ENCODE measurements at regions of chr7 and their contacts with region 1.

Region 1: DNA sequence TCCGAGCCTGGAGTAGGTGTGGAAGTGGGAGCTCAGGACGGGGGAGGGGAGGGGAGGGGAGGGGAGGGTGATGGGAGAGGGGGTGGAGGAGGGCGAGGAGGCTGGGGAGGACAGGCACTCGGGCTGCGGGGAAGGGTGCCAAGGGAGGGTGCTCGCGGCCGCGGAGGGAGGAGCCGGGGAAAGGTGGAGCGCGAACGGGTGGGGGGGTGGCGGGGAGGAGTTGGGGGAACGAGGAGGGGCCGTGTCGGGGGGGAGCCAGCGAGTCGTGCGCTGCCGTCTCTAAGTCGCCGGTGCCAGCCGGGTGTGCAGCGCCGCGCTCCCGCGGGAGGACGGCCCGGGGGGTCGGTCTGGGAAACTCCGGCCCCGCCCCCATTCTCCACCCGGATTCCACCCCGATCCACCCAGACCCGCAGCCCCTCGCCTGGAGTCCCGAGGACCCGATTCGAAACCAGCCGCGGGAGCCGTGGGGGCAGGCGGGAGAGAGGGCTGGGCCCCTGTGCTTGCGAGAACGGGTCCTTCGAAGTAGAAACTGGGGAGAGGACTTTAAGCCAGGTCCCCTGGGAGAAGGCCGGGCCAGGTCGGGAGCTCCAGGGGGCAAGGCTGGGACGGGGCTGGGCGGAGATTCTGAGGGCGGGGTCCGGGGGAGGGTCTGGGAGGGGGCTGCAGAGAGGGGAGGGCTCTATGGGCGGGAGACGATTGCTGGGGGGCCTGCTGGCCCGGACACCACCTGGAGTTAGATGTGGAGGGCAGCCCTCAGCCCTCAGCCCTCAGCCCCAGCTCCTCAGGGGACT is at the start of gene ZNF467:
- DNase-seq: peak; percentile 41

Region 2: GRCh38 chr7:149790146-149790548 is 16.5 kb after region 1 on chr7:
- CTCF ChIA-PET with region 1: interaction called, 17 read pairs
- POLR2A ChIA-PET with region 1: interaction called, 8 read pairs
- DNase-seq: peak; percentile 43